PC-3 (cell line): ENCODE measurements at regions of chr17 and their contacts with region 1.

Region 1: GRCh38 chr17:71361656-71362450 is 759.0 kb upstream of the SOX9 start:
- DNase-seq: no peak
- ATAC-seq: no peak
- H3K4me3 ChIP-seq: no peak overlapping the region
- H3K27ac ChIP-seq: no peak overlapping the region
- H3K4me1 ChIP-seq: no peaks in the 10 kb centered on the region
- H3K27me3 ChIP-seq: no peaks in the 10 kb centered on the region
- CTCF ChIP-seq: no peak

Region 2: GRCh38 chr17:71251951-71252350 is 109.9 kb before region 1 on chr17:
- CTCF ChIA-PET with region 1: no interaction called
- POLR2A ChIA-PET with region 1: interaction called, 12 read pairs
- intact Hi-C with region 1: no loop called
- DNase-seq: no peak
- ATAC-seq: no peak
- H3K4me3 ChIP-seq: no peak overlapping the region
- H3K27ac ChIP-seq: no peak overlapping the region
- H3K4me1 ChIP-seq: no peaks in the 10 kb centered on the region
- H3K27me3 ChIP-seq: no peaks in the 10 kb centered on the region
- CTCF ChIP-seq: no peak

Region 3: GRCh38 chr17:71423871-71424546 is 62.2 kb after region 1 on chr17:
- CTCF ChIA-PET with region 1: no interaction called
- POLR2A ChIA-PET with region 1: no interaction called
- intact Hi-C with region 1: no loop called
- DNase-seq: peak; percentile 99
- ATAC-seq: peak; percentile 97
- H3K4me3 ChIP-seq: no peak overlapping the region
- H3K27ac ChIP-seq: peak overlapping the region; percentile 97
- H3K4me1 ChIP-seq: peaks cover 46% of the 10 kb centered on the region
- H3K27me3 ChIP-seq: no peaks in the 10 kb centered on the region
- CTCF ChIP-seq: peak; percentile 38; the same call in 1 of the 2 replicates